GM12878 (cell line): ENCODE measurements at regions of chr6 and their contacts with region 1.

Region 1: GRCh38 chr6:32589598-32590449 is at the start of gene HLA-DRB1:
- DNase-seq: peak; percentile 91
- ATAC-seq: peak; percentile 89
- H3K4me3 ChIP-seq: peak within 1 kb of the TSS; percentile 72
- H3K27ac ChIP-seq: peak within 1 kb of the TSS; percentile 93
- H3K4me1 ChIP-seq: peaks cover 4% of the 10 kb centered on the region; the same call in 1 of the 2 replicates
- H3K27me3 ChIP-seq: no peaks in the 10 kb centered on the region
- CTCF ChIP-seq: no peak
- EP300 ChIP-seq: peak in 1 of 2 experiments; percentile 20; a peak in 1 of 4 replicates
- POLR2A ChIP-seq: peak; percentile 82
- RAD21 ChIP-seq: no peak
- polyA plus RNA-seq, gene HLA-DRB1: 312 to 364 TPM

Region 2: DNA sequence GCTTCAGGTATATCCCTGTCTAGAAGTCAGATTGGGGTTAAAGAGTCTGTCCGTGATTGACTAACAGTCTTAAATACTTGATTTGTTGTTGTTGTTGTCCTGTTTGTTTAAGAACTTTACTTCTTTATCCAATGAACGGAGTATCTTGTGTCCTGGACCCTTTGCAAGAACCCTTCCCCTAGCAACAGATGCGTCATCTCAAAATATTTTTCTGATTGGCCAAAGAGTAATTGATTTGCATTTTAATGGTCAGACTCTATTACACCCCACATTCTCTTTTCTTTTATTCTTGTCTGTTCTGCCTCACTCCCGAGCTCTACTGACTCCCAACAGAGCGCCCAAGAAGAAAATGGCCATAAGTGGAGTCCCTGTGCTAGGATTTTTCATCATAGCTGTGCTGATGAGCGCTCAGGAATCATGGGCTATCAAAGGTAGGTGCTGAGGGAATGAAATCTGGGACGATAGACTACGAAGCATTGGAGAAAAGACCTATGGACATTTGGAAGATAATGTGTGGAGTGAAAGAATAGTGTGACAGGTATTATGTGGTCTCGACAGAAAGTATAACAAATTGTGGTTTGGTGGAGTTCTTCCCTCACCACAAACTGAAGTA is 150.1 kb before region 1 on chr6 and contains the start of gene HLA-DRA:
- CTCF ChIA-PET with region 1: interaction called, 3 read pairs
- POLR2A ChIA-PET with region 1: interaction called, 12 read pairs
- RAD21 ChIA-PET with region 1: interaction called, 5 read pairs
- SMC1A ChIA-PET with region 1: interaction called, 6 read pairs
- in situ Hi-C with region 1: no loop called
- intact Hi-C with region 1: loop called (anchors 5 kb)
- DNase-seq: peak; percentile 99
- ATAC-seq: peak; percentile 71
- H3K4me3 ChIP-seq: peak within 1 kb of the TSS; percentile 99
- H3K27ac ChIP-seq: peak within 1 kb of the TSS; percentile 100
- H3K4me1 ChIP-seq: peaks cover 29% of the 10 kb centered on the region
- H3K27me3 ChIP-seq: no peaks in the 10 kb centered on the region
- CTCF ChIP-seq: no peak
- EP300 ChIP-seq: peak; percentile 66 to 68; a peak in 3 of 4 replicates
- POLR2A ChIP-seq: peak; percentile 95
- RAD21 ChIP-seq: no peak
- polyA plus RNA-seq, gene HLA-DRA: 4,131 to 6,024 TPM

Region 3: GRCh38 chr6:32529697-32530429 is 60.0 kb before region 1 on chr6 and contains the start of gene HLA-DRB5:
- CTCF ChIA-PET with region 1: interaction called, 7 read pairs
- POLR2A ChIA-PET with region 1: interaction called, 17 read pairs
- RAD21 ChIA-PET with region 1: interaction called, 14 read pairs
- SMC1A ChIA-PET with region 1: interaction called, 9 read pairs
- in situ Hi-C with region 1: loop called (anchors 5 kb)
- intact Hi-C with region 1: no loop called
- DNase-seq: peak; percentile 58
- ATAC-seq: peak; percentile 90
- H3K4me3 ChIP-seq: peak within 1 kb of the TSS; percentile 58; the same call in 1 of the 2 replicates
- H3K27ac ChIP-seq: peak within 1 kb of the TSS; percentile 92
- H3K4me1 ChIP-seq: no peaks in the 10 kb centered on the region
- H3K27me3 ChIP-seq: no peaks in the 10 kb centered on the region
- CTCF ChIP-seq: no peak
- EP300 ChIP-seq: no peak
- POLR2A ChIP-seq: peak; percentile 73
- RAD21 ChIP-seq: no peak
- polyA plus RNA-seq, gene HLA-DRB5: 38.5 to 40.6 TPM

Region 4: GRCh38 chr6:32604434-32604877 is 14.6 kb after region 1 on chr6:
- CTCF ChIA-PET with region 1: interaction called, 5 read pairs
- POLR2A ChIA-PET with region 1: interaction called, 34 read pairs
- RAD21 ChIA-PET with region 1: no interaction called
- SMC1A ChIA-PET with region 1: interaction called, 23 read pairs
- in situ Hi-C with region 1: no loop called
- intact Hi-C with region 1: loop called (anchors 2 kb)
- DNase-seq: peak; percentile 82
- ATAC-seq: peak; percentile 73
- H3K4me3 ChIP-seq: no peak overlapping the region
- H3K27ac ChIP-seq: peak overlapping the region; percentile 95
- H3K4me1 ChIP-seq: peaks cover 9% of the 10 kb centered on the region
- H3K27me3 ChIP-seq: no peaks in the 10 kb centered on the region
- CTCF ChIP-seq: no peak
- EP300 ChIP-seq: peak in 1 of 2 experiments; percentile 62; a peak in 2 of 4 replicates
- POLR2A ChIP-seq: no peak
- RAD21 ChIP-seq: no peak

Region 5: DNA sequence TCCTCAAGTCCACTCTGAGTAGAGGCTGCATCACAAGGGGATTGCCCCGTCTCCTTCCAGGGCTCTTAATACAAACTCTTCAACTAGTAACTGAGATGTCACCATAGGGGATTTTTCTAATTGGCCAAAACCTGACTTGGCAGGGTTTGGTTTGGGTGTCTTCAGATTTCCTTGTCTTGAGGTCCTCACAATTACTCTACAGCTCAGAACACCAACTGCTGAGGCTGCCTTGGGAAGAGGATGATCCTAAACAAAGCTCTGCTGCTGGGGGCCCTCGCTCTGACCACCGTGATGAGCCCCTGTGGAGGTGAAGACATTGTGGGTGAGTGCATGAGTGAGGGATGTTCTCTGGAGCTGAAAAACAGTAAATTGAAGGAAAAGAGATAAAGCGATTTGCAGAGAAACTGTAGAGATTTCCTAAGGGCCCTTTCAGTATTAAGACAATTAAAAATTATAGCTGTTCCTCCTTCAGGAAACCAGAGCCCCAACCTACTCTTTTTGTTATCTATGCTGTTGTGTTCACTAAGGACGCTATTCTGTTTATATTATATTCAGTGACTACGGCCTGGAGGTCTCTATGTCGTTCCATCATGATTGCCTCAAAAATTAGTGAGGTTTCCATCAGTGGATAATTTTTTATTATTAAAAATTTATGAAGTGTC is 47.5 kb after region 1 on chr6 and contains the start of gene HLA-DQA1:
- CTCF ChIA-PET with region 1: interaction called, 7 read pairs
- POLR2A ChIA-PET with region 1: interaction called, 77 read pairs
- RAD21 ChIA-PET with region 1: interaction called, 12 read pairs
- SMC1A ChIA-PET with region 1: interaction called, 18 read pairs
- in situ Hi-C with region 1: no loop called
- intact Hi-C with region 1: loop called (anchors 5 kb)
- DNase-seq: peak; percentile 91
- ATAC-seq: peak; percentile 74
- H3K4me3 ChIP-seq: peak within 1 kb of the TSS; percentile 70
- H3K27ac ChIP-seq: peak within 1 kb of the TSS; percentile 95
- H3K4me1 ChIP-seq: peaks cover 12% of the 10 kb centered on the region
- H3K27me3 ChIP-seq: no peaks in the 10 kb centered on the region
- CTCF ChIP-seq: no peak
- EP300 ChIP-seq: no peak
- POLR2A ChIP-seq: peak; percentile 95
- RAD21 ChIP-seq: no peak
- polyA plus RNA-seq, gene HLA-DQA1: 327 to 423 TPM

Region 6: DNA sequence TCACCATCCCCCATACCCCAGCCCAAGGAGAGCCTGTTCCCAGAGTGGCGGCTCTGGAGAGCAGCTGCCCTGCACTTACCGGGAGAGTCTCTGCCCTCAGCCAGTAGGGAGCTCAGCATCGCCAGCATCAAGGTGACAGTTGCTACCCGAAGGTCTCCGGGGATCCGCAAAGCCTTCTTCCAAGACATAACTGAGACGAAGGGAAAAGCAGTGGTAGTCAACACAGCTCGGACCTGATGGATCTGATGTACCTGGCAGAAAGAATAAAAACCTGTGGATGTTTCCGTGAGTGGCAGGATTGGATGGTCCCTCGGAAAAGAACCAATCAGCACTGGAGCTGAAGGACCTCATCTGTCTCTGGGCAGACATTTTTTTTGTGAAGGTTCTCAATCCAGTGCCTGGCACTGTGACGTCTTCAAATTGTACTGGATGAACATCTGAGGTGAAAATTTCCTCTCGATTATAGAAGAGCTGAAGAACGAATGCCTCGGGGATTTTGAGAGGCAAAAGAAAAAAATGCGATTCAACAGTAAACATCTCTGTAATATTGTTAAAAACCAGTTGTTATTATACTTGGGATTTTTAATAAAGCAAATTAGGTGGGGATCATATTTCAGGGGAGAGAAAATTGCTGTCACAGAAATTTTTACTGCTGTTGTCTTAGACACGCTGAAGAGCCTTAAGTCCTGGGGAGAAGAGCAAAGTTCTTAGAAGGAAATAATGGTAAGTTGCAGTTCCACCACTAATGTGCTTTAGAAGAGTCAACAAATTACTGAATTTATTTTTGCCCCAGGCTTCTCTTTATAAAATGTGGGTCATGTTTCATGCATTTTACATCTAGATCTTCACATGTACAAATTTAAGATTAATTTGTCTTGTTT is 76.8 kb after region 1 on chr6 and contains the start of gene HLA-DQB1:
- CTCF ChIA-PET with region 1: no interaction called
- POLR2A ChIA-PET with region 1: interaction called, 10 read pairs
- RAD21 ChIA-PET with region 1: interaction called, 6 read pairs
- SMC1A ChIA-PET with region 1: interaction called, 5 read pairs
- in situ Hi-C with region 1: no loop called
- intact Hi-C with region 1: no loop called
- DNase-seq: peak; percentile 77
- ATAC-seq: peak; percentile 70
- H3K4me3 ChIP-seq: peak within 1 kb of the TSS; percentile 55; the same call in 1 of the 2 replicates
- H3K27ac ChIP-seq: peak within 1 kb of the TSS; percentile 92
- H3K4me1 ChIP-seq: peaks cover 22% of the 10 kb centered on the region
- H3K27me3 ChIP-seq: no peaks in the 10 kb centered on the region
- CTCF ChIP-seq: no peak
- EP300 ChIP-seq: no peak
- POLR2A ChIP-seq: peak; percentile 72
- RAD21 ChIP-seq: no peak
- polyA plus RNA-seq, gene HLA-DQB1: 38.1 to 66.1 TPM